ENCODE measurements at regions of chr14 and their contacts with region 1.

Region 1: DNA sequence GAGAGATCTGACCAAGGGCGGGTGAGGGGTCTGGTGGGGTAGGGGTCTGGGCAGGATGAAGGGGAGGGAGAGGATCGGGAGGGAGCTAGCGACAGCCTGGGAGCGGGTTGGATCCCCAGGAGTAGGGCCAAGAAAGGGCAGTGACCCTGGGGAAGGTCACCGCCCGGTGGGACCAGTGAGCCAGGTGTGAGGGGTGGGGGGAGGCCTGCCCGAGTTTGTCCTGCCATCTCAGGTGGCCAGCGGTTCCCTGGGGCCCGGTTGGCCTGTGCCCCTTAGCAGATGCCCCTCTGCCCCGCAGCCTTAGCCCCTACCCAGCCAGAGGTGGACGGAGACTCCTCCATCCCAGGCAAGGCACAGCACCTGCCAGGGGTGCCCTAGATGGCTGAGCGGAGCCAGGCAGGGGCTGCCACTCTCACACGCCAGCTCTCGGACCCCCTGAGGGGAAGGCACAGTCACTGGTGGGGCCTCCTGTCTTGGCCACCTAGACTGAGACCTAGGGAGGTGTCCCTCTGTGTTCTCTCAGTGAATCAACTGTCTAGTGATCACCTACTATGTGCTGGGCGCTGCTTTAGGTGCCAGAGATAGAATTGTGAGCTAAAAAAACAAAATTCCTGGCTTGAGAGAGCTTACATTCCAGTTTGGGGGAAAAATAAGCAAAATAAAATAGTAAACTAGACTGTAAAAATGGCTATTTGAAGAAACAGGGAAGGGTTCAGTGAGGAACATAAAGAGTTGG is 639 bp upstream of the TTC7B start:
- DNase-seq: no peak
- ATAC-seq: no peak
- H3K4me3 ChIP-seq: no peak overlapping the region
- H3K27ac ChIP-seq: no peak overlapping the region
- H3K4me1 ChIP-seq: no peaks in the 10 kb centered on the region; the same call in 1 of the 2 replicates
- H3K27me3 ChIP-seq: no peaks in the 10 kb centered on the region
- CTCF ChIP-seq: no peak; the same call in 1 of the 2 replicates

Region 2: DNA sequence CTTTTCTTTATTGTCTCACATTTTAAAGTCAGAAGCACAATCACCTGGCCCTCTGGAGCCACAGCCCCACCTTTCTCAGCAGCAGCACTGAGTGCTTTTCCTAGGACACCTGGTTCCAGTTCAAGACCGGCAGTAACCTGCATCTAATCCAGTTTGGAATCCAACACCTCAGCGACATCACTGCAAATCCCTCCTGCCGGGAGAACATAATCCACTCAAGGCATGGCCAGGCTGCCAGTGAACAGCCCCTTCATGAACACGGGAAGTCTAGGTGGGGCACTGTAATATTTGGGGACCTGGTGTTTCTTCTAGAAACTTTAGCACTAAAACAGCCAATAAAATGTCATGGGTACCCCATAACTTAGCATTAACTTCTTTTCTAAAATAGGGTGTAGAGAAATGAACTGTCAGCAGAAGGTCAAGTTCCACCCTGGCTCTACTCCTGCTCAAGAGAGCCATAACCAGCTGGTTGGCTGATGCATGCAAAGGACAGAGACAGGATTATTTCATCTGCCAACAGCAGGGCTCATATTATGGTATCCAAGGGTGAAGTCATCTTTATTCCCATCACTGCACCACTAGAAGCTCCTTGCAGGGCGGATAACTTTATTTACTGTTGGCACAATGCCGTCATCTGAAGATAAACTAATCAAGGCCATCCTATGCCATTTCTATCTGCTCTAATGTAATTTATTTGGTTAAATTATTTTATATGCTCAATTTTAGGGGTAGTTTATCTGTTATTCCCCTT is 77.4 kb before region 1 on chr14:
- CTCF ChIA-PET with region 1: no interaction called
- POLR2A ChIA-PET with region 1: interaction called, 10 read pairs
- in situ Hi-C with region 1: no loop called
- intact Hi-C with region 1: no loop called
- DNase-seq: no peak
- ATAC-seq: no peak
- H3K4me3 ChIP-seq: no peak overlapping the region
- H3K27ac ChIP-seq: no peak overlapping the region
- H3K4me1 ChIP-seq: no peaks in the 10 kb centered on the region
- H3K27me3 ChIP-seq: no peaks in the 10 kb centered on the region
- CTCF ChIP-seq: no peak

Region 3: DNA sequence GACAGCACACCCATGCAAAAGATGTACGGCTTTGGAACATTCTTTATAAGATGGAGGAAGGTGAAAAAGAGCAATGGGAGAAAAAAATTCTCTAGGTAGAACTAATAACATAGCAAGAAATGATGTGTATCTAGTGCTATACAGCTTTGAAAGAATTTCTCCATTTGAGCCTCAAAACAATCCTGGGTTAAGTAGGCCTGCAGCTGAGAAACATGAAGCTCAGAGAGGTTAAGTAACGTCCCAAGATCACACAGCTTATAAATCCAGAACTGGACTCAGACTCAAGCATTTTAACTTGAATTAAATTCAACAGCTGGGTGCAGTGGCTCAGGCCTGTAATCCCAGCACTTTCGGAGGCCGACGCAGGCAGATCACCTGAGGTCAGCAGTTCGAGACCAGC is 33.5 kb before region 1 on chr14:
- CTCF ChIA-PET with region 1: interaction called, 17 read pairs
- POLR2A ChIA-PET with region 1: no interaction called
- in situ Hi-C with region 1: no loop called
- intact Hi-C with region 1: no loop called
- DNase-seq: no peak
- ATAC-seq: no peak
- H3K4me3 ChIP-seq: no peak overlapping the region
- H3K27ac ChIP-seq: no peak overlapping the region
- H3K4me1 ChIP-seq: no peaks in the 10 kb centered on the region
- H3K27me3 ChIP-seq: no peaks in the 10 kb centered on the region
- CTCF ChIP-seq: no peak

Region 4: DNA sequence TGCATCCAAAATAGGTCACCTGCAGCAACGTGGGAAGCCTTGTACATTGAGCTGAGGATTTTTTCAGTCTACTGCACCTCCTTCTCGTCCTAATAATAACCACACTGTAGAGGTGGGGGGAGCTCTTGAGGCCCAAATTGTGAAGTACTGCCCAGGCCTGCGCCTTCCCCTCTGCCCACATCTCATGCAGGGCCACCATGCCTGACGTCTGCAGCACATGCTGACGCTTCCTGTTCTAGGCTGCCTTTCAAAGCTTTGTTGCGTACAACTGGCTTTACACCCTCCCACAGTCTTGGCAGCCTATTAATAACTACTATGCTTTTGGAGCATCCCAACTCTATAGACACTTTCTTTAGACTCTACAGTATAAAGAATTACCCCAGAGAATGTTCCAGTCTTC is 25.9 kb after region 1 on chr14:
- CTCF ChIA-PET with region 1: no interaction called
- POLR2A ChIA-PET with region 1: no interaction called
- in situ Hi-C with region 1: no loop called
- intact Hi-C with region 1: no loop called
- DNase-seq: no peak
- ATAC-seq: no peak
- H3K4me3 ChIP-seq: no peak overlapping the region
- H3K27ac ChIP-seq: no peak overlapping the region
- H3K4me1 ChIP-seq: no peaks in the 10 kb centered on the region
- H3K27me3 ChIP-seq: no peaks in the 10 kb centered on the region
- CTCF ChIP-seq: no peak

Measured in Panc1 (cell line).